Left cardiac atrium (tissue), 4 donors: ENCODE measurements at regions of chr15 and their contacts with region 1.

Region 1: GRCh38 chr15:64460206-64460734 is at the start of gene ZNF609:
- DNase-seq: peak; percentile 92
- ATAC-seq: peak; percentile 81 to 87
- total RNA-seq, gene ZNF609: 17.5 to 18.1 TPM

Region 2: DNA sequence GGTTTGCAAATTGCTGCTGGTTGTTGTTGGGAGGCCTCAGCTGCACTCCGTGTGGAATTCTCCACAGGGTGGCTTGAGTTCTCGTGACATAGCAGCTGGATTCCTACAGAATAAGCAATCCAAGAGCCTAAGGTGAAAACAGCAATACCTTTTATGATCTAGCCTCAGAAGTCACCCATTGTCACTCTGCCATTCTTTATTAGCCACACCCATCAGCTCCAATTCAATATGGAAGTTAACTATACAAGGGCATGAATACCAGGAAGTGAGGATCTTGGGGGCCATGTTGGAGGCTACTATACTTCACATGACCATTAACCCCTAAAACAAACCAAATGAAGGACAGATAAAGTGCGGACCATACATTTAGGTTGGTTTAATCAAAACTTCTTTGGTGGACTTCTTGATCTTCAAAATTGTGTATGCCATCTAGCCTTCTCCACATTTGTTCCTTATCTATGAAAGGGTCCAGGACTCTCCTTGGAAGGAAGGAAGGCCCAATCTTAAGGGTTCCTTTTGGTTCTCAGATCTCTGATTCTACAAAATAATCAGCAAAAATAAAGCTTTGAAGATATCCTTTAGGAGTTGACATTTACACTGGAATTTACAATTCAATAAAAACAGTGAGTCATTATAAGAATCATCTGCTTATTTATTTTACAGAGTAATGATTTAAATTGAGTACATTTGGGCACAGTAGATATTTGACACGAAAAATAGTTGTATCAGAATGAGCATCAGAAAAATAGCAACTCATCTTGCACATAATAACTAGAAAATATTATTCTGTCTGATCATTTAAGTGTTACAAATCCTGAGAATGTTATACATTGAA is 388.1 kb before region 1 on chr15:
- intact Hi-C with region 1: no loop called
- DNase-seq: no peak
- ATAC-seq: peak in 1 of 2 donors; percentile 1

Region 3: GRCh38 chr15:64634576-64635498 is 174.6 kb after region 1 on chr15:
- intact Hi-C with region 1: loop called in 1 of 2 experiments (anchors 10 kb)
- DNase-seq: no peak
- ATAC-seq: peak in 1 of 2 donors; percentile 17